MCF 10A (cell line): ENCODE measurements at regions of chr5 and their contacts with region 1.

Region 1: DNA sequence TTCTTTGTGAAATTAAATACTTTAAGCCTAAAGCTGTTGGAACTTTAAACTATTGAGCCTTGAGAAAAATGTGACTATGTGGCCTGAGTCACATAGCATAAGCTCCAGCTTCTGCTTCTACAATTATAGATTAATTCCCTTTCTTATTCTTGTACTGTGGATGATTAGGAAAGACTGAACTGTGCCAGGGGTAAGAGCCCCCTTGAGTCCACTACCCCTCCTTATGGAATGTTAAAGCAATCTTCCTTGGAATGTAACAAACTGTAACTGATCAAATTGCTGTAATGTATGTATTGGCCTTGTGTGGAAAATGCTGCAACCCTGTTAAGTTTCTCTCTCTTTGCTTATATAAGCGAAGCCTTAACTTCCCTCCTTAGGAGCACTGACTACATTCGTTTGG is 273.2 kb downstream of the FAM170A start:
- DNase-seq: no peak
- H3K4me3 Mint-ChIP-seq: no peak overlapping the region
- H3K27ac Mint-ChIP-seq: no peak overlapping the region
- H3K4me1 Mint-ChIP-seq: no peaks in the 10 kb centered on the region
- H3K27me3 Mint-ChIP-seq: no peaks in the 10 kb centered on the region
- CTCF ChIP-seq: no peak

Region 2: DNA sequence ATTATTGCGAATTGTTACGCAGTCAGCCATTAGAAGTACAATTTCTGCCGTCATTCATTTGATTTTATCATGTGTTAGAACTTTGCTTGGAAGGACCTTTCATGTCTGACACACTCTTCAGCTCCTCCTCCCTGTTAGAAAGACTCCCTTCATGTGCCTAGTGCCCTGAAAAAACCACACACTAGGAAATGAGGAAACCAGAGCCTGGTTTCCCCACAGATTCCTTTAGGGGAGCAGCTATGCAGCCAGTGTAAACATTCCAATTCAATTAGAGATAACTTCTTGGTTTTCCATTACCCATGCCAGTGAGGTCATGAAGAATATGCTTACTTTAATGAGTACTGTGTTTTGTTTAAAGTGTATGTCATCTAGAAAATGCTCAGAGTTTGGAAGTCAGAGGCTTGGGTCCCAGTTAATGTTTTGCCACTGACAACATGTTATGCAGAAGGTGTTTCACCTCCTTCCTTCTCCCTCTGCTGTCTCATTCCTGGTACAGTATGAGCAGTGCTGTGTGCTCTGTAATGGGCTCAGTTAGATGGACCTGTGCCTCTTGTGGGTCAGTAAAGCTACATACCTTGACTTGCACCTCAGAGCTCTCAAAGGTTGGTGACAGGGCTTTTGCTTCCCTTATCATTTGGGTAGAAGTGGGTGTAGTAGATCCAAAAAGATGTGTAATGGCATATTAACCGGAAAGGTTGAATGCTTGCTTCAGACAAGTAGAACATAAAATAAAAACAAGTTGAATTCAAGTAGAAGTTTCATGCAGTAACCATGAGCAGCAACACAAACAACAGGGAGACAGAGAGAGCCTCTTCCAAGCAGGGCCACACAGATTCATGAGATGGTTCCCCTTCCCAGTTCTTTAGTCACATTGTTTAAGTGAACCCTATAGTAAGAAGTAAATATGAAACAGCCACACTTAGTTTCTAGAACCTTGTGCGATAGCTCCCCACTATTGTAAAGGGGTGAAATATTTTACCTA is 599.4 kb before region 1 on chr5:
- CTCF ChIA-PET with region 1: no interaction called
- POLR2A ChIA-PET with region 1: no interaction called
- intact Hi-C with region 1: no loop called
- DNase-seq: peak; percentile 94
- H3K4me3 Mint-ChIP-seq: peak overlapping the region; percentile 52
- H3K27ac Mint-ChIP-seq: peak overlapping the region; percentile 91
- H3K4me1 Mint-ChIP-seq: peaks cover 33% of the 10 kb centered on the region
- H3K27me3 Mint-ChIP-seq: no peaks in the 10 kb centered on the region
- CTCF ChIP-seq: no peak

Region 3: GRCh38 chr5:119820016-119820415 is 82.6 kb before region 1 on chr5:
- CTCF ChIA-PET with region 1: no interaction called
- POLR2A ChIA-PET with region 1: no interaction called
- intact Hi-C with region 1: loop called (anchors 5 kb)
- DNase-seq: no peak
- H3K4me3 Mint-ChIP-seq: no peak overlapping the region
- H3K27ac Mint-ChIP-seq: no peak overlapping the region
- H3K4me1 Mint-ChIP-seq: no peaks in the 10 kb centered on the region
- H3K27me3 Mint-ChIP-seq: no peaks in the 10 kb centered on the region
- CTCF ChIP-seq: no peak